ENCODE measurements at regions of chr7 and their contacts with region 1.

Region 1: GRCh38 chr7:16743236-16743635 is 10.3 kb upstream of the TSPAN13 start:
- DNase-seq: no peak
- ATAC-seq: no peak
- H3K4me3 ChIP-seq: no peak overlapping the region
- H3K27ac ChIP-seq: no peak overlapping the region
- H3K4me1 ChIP-seq: peaks cover 0 to 14% of the 10 kb centered on the region in 2 experiments; a peak in 2 of 4 replicates
- H3K27me3 ChIP-seq: no peaks in the 10 kb centered on the region
- CTCF ChIP-seq: no peak
- POLR2A ChIP-seq: no peak
- RAD21 ChIP-seq: no peak

Region 2: GRCh38 chr7:16420649-16421332 is 322.4 kb before region 1 on chr7:
- CTCF ChIA-PET with region 1: no interaction called
- POLR2A ChIA-PET with region 1: no interaction called
- RAD21 ChIA-PET with region 1: no interaction called
- intact Hi-C with region 1: no loop called
- DNase-seq: peak; percentile 68
- ATAC-seq: peak; percentile 81
- H3K4me3 ChIP-seq: peak overlapping the region; percentile 53 to 60
- H3K27ac ChIP-seq: peak overlapping the region; percentile 90
- H3K4me1 ChIP-seq: peaks cover 11 to 23% of the 10 kb centered on the region in 2 experiments
- H3K27me3 ChIP-seq: no peaks in the 10 kb centered on the region
- CTCF ChIP-seq: peak in 2 of 3 experiments; percentile 11 to 15; a peak in 1 of 6 replicates
- POLR2A ChIP-seq: peak; percentile 80
- RAD21 ChIP-seq: no peak

Region 3: DNA sequence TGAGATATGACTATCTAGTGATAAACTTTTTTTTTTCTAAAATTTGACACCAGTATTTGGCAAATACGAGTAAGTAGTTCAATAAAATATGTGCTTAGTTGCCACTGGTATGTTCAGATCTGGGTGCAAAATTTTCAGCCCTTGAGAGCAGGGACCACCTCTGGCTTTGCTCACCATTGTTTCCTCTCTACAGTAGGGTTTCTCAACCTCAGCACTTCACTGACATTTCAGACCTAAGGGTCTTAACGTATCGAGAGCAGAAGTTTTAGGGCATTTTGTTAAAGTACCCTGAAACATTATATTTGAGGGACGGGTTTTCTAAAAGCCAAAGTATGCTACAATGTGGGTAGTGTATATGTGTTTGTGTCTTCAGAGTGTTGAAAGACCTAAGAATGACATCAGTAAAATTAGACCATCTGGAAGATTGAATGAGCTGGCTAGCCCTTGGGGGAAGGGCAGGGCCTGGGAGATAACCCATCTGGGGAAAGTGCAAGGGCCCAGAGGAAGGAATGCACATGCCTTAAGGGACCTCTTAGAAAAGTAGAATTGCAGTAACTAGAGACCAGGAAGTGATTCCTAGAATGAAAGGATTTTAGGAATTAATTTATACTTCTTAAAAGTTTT is 85.5 kb before region 1 on chr7:
- CTCF ChIA-PET with region 1: no interaction called
- POLR2A ChIA-PET with region 1: no interaction called
- RAD21 ChIA-PET with region 1: no interaction called
- intact Hi-C with region 1: no loop called
- DNase-seq: no peak
- ATAC-seq: peak; percentile 51
- H3K4me3 ChIP-seq: no peak overlapping the region
- H3K27ac ChIP-seq: no peak overlapping the region
- H3K4me1 ChIP-seq: peaks cover 33% of the 10 kb centered on the region in 2 experiments
- H3K27me3 ChIP-seq: no peaks in the 10 kb centered on the region
- CTCF ChIP-seq: peak in 2 of 3 experiments; percentile 9 to 13; a peak in 1 of 6 replicates
- POLR2A ChIP-seq: no peak
- RAD21 ChIP-seq: no peak

Region 4: GRCh38 chr7:16676579-16676978 is 66.7 kb before region 1 on chr7:
- CTCF ChIA-PET with region 1: no interaction called
- POLR2A ChIA-PET with region 1: no interaction called
- RAD21 ChIA-PET with region 1: no interaction called
- intact Hi-C with region 1: loop called (anchors 2 kb)
- DNase-seq: no peak
- ATAC-seq: no peak
- H3K4me3 ChIP-seq: no peak overlapping the region
- H3K27ac ChIP-seq: no peak overlapping the region
- H3K4me1 ChIP-seq: peaks cover 0 to 3% of the 10 kb centered on the region in 2 experiments; a peak in 1 of 4 replicates
- H3K27me3 ChIP-seq: no peaks in the 10 kb centered on the region
- CTCF ChIP-seq: no peak
- POLR2A ChIP-seq: no peak
- RAD21 ChIP-seq: no peak

Measured in HCT116 (cell line).